Activated CD4-positive, alpha-beta T cell treated with anti-CD3 and anti-CD28 coated beads for 36 hours (primary cell): ENCODE measurements at regions of chr11 and their contacts with region 1.

Region 1: DNA sequence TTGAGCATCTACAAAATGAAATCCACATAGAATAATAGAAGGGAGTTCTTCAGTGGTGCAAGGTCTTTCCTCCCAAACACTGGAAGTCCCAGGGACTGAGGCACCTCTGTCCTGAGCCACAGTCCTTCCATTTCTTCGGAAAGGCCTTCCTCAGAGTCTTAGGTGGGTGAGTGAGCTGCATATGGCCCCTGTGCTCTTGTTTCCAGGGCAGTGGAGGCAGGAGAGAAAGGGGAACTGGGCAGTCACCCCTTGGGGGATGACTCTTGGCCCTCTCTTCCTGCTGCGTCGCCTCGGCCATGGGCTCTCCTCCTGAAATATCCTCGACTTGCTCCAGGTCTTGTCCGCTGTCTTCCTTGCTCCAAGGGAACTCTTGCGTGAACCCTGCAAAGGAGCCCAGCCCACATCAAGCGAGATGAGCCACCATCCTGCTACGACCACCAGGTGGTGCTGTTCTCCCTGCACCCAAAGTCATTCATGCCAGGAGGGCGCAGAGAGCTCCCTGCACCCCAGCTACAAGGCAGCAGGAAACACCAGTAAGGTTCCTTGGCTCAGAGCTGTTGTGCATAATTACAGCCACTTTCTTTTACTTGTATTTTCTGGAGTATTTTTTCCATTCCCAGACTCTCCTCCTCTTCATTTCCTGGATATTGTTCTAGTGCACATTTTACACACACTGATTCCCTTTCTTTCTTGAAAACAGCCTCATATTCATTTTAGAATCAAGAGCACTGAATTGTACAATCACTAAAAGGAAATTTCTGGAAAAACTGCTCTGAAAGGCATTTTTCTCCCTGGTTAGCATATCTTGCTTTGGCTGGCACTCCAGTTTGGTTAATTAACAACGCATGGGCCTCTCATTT is 397.8 kb downstream of the OPCML start:
- DNase-seq: peak; percentile 69
- ATAC-seq: peak; percentile 53
- H3K4me3 Mint-ChIP-seq: no peak overlapping the region
- H3K27ac Mint-ChIP-seq: no peak overlapping the region
- H3K4me1 Mint-ChIP-seq: no peaks in the 10 kb centered on the region
- H3K27me3 Mint-ChIP-seq: peaks cover 7% of the 10 kb centered on the region

Region 2: GRCh38 chr11:132972565-132972964 is 162.0 kb before region 1 on chr11:
- CTCF ChIA-PET with region 1: no interaction called
- POLR2A ChIA-PET with region 1: no interaction called
- intact Hi-C with region 1: no loop called
- DNase-seq: no peak
- ATAC-seq: no peak
- H3K4me3 Mint-ChIP-seq: no peak overlapping the region
- H3K27ac Mint-ChIP-seq: no peak overlapping the region
- H3K4me1 Mint-ChIP-seq: no peaks in the 10 kb centered on the region
- H3K27me3 Mint-ChIP-seq: peaks cover 7% of the 10 kb centered on the region

Region 3: DNA sequence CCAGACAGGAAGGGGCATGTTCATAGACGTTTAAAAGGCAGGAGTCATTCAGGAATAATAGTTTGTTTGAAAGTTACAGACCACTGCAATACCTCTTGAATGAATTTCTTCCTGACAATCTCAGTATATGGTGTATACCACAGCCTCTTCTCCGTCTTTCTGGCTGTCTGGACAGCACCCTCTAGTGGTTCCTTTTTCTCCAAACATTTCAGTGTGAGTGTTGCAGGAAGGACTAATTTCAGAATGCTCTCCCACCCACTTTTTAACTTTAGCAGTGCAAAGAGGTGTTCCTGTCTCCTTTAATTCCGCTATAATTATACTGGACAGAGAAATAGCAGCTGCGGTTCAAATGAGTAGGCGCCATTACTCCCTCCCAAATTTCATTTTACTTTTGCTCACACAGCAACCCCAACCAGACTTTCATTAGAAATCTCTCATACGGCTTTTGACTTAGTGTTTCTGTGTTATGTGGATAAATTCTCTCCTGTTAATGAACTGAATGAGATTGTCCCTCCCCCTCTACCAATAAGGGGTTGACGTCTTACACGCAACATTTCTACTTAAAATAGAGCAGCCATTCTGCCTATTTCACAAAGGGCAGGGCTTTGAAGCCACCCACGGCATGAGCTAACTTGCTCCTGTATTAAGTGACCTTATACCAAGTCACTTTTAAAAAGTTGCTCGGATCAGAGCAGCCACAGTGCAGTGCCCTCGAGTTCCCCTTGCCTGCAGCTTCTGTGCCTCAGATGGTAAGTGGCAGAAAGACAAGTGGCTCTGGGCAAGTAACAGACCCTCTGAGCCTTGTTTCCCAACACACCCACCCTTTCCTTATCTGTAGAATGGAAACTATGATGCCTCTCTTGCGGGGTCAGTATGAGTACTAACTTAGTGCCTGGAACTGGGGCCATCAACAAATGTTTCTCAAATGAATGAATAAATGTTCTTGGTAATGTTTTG is 29.2 kb after region 1 on chr11:
- CTCF ChIA-PET with region 1: interaction called, 4 read pairs
- POLR2A ChIA-PET with region 1: no interaction called
- intact Hi-C with region 1: loop called in 1 of 2 experiments (anchors 2 kb)
- DNase-seq: no peak
- ATAC-seq: peak; percentile 36
- H3K4me3 Mint-ChIP-seq: no peak overlapping the region
- H3K27ac Mint-ChIP-seq: no peak overlapping the region
- H3K4me1 Mint-ChIP-seq: no peaks in the 10 kb centered on the region
- H3K27me3 Mint-ChIP-seq: peaks cover 10% of the 10 kb centered on the region

Region 4: GRCh38 chr11:133306019-133306418 is 171.5 kb after region 1 on chr11:
- CTCF ChIA-PET with region 1: no interaction called
- POLR2A ChIA-PET with region 1: no interaction called
- intact Hi-C with region 1: no loop called
- DNase-seq: no peak
- ATAC-seq: no peak
- H3K4me3 Mint-ChIP-seq: no peak overlapping the region
- H3K27ac Mint-ChIP-seq: no peak overlapping the region
- H3K4me1 Mint-ChIP-seq: no peaks in the 10 kb centered on the region
- H3K27me3 Mint-ChIP-seq: peaks cover 2% of the 10 kb centered on the region

Region 5: DNA sequence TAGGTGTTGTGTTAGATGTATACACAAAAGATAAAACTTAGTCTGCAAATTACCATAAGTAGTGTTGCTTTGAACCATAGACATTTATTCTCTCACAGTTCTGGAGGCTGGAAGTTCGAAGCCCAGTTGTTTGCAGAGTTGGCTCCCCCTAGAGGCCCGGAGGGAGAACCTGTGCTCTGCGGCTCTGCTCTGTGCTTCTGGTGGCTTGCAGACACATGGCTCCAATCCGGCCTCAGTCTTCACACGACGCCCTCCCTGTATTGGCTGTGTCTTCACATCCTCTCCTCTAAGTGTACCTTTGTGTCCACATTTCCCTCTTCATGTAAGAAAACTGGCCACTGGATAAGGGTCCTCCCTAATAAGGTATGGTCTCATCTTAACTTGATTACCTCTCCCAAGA is 269.4 kb after region 1 on chr11:
- CTCF ChIA-PET with region 1: no interaction called
- POLR2A ChIA-PET with region 1: no interaction called
- intact Hi-C with region 1: loop called in 1 of 2 experiments (anchors 5 kb)
- DNase-seq: peak; percentile 32
- ATAC-seq: no peak
- H3K4me3 Mint-ChIP-seq: no peak overlapping the region
- H3K27ac Mint-ChIP-seq: no peak overlapping the region
- H3K4me1 Mint-ChIP-seq: no peaks in the 10 kb centered on the region
- H3K27me3 Mint-ChIP-seq: no peaks in the 10 kb centered on the region

Region 6: GRCh38 chr11:133821776-133822175 is 687.2 kb after region 1 on chr11:
- CTCF ChIA-PET with region 1: interaction called, 3 read pairs
- POLR2A ChIA-PET with region 1: no interaction called
- intact Hi-C with region 1: loop called in 1 of 2 experiments (anchors 2 kb)
- DNase-seq: peak; percentile 66
- ATAC-seq: peak; percentile 44
- H3K4me3 Mint-ChIP-seq: no peak overlapping the region
- H3K27ac Mint-ChIP-seq: no peak overlapping the region
- H3K4me1 Mint-ChIP-seq: no peaks in the 10 kb centered on the region
- H3K27me3 Mint-ChIP-seq: peaks cover 2% of the 10 kb centered on the region

Region 7: GRCh38 chr11:133834682-133835592 is 700.4 kb after region 1 on chr11:
- CTCF ChIA-PET with region 1: interaction called, 10 read pairs
- POLR2A ChIA-PET with region 1: no interaction called
- intact Hi-C with region 1: loop called (anchors 1 kb)
- DNase-seq: peak; percentile 78
- ATAC-seq: peak; percentile 85
- H3K4me3 Mint-ChIP-seq: no peak overlapping the region
- H3K27ac Mint-ChIP-seq: peak overlapping the region; percentile 10
- H3K4me1 Mint-ChIP-seq: peaks cover 11% of the 10 kb centered on the region
- H3K27me3 Mint-ChIP-seq: peaks cover 11% of the 10 kb centered on the region